Activated T-helper 1 cell treated with anti-CD3 and anti-CD28 coated beads, Interleukin-12 subunit alpha, Interleukin-12 subunit beta, Interleukin-2, Interleukin-4 antibody, amounts not matched to agents 30 ng/mL and 10 ng/mL and 1 ng/mL, durations not matched to agents 14 hours and 24 hours and 36 hours (primary cell): ENCODE measurements at regions of chr3 and their contacts with region 1.

Region 1: DNA sequence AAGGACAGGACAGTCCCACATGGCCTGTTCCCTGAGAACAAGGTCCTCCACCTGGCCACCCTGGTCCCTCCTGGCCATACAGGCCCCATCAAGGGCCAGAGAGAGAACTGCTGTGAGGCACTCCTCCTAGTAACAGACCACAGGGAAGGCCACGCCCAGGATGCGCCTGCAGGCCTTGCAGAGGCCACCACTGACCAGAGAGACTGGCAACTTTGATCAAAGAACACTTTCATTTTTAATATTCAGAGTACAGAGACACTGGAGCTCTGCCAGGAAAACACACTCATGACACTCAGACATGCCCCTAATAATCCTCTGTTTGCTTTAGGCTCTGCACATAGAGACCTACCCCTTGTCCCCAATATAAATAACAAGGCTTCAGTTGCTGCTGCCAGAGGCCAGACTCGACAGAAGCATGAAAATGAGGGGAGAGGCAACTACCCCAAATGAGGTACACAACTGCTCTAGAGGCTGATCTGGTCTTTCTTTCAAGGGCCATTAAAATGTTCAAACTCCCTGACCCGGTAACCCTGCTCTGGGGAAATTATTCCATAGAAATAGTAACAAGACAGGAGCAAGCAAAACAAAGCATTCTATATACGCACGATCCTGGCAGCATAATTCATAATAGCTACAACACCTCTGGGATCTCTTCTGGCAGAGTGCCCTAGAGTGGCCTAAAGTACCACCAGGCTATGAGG is 44.8 kb downstream of the CCDC12 start:
- DNase-seq: no peak
- H3K4me3 Mint-ChIP-seq: peak overlapping the region; percentile 25
- H3K27ac Mint-ChIP-seq: peak overlapping the region; percentile 85
- H3K4me1 Mint-ChIP-seq: peaks cover 68% of the 10 kb centered on the region
- H3K27me3 Mint-ChIP-seq: no peaks in the 10 kb centered on the region

Region 2: GRCh38 chr3:46748170-46748569 is 183.6 kb before region 1 on chr3:
- intact Hi-C with region 1: no loop called
- DNase-seq: no peak
- H3K4me3 Mint-ChIP-seq: no peak overlapping the region
- H3K27ac Mint-ChIP-seq: no peak overlapping the region
- H3K4me1 Mint-ChIP-seq: no peaks in the 10 kb centered on the region
- H3K27me3 Mint-ChIP-seq: peaks cover 8% of the 10 kb centered on the region

Region 3: GRCh38 chr3:46909535-46910442 is 22.0 kb before region 1 on chr3:
- intact Hi-C with region 1: loop called (anchors 2 kb)
- DNase-seq: peak; percentile 61
- H3K4me3 Mint-ChIP-seq: no peak overlapping the region
- H3K27ac Mint-ChIP-seq: no peak overlapping the region
- H3K4me1 Mint-ChIP-seq: peaks cover 15% of the 10 kb centered on the region
- H3K27me3 Mint-ChIP-seq: no peaks in the 10 kb centered on the region